ENCODE measurements at regions of chr22 and their contacts with region 1.

Region 1: GRCh38 chr22:22352371-22353365 is 108.1 kb downstream of the VPREB1 start:
- DNase-seq: no peak

Region 2: DNA sequence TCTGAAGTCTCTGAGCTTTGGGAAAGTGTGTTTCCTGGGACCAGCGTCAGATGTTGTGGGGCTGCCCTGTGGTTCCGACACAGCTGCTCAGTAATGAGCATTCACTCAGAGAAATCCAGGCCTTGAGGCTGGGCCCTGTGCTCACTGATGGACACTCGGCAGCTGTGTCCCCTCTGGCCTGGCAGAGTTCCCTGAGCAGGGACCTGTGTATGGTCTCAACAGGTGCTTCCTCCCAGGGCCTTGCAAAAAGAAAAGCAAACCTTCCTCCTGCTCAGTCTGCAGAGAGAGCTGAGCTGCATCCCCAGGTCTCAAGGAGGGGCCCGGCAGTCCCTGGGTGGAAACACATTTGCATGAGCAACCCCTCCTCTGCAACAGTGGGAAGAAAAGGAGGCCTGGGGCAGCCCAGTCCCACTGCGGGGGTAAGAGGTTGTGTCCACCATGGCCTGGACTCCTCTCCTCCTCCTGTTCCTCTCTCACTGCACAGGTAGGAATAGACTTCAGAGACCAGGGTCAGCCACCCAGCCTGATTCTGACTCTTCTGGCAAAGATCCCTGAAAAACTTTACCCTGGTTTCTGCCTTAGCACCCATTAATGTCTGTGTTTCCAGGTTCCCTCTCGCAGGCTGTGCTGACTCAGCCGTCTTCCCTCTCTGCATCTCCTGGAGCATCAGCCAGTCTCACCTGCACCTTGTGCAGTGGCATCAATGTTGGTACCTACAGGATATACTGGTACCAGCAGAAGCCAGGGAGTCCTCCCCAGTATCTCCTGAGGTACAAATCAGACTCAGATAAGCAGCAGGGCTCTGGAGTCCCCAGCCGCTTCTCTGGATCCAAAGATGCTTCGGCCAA is 23.1 kb after region 1 on chr22:
- intact Hi-C with region 1: loop called (anchors 2 kb)
- DNase-seq: no peak

Region 3: GRCh38 chr22:22397277-22397870 is 44.7 kb after region 1 on chr22:
- intact Hi-C with region 1: loop called (anchors 1 kb)
- DNase-seq: peak in 3 of 10 donors; percentile 13 to 40 (median 34)

Region 4: GRCh38 chr22:22463855-22464540 is 111.3 kb after region 1 on chr22:
- intact Hi-C with region 1: no loop called
- DNase-seq: peak in 5 of 10 donors; percentile 16 to 66 (median 56)